ENCODE measurements at regions of chr3 and their contacts with region 1.

Region 1: GRCh38 chr3:125003369-125003853 is 52.4 kb downstream of the HEG1 start:
- DNase-seq: peak; percentile 42
- H3K4me3 ChIP-seq: no peak overlapping the region
- H3K27ac ChIP-seq: no peak overlapping the region
- H3K4me1 ChIP-seq: peaks cover 2% of the 10 kb centered on the region
- H3K27me3 ChIP-seq: no peaks in the 10 kb centered on the region
- CTCF ChIP-seq: no peak

Region 2: DNA sequence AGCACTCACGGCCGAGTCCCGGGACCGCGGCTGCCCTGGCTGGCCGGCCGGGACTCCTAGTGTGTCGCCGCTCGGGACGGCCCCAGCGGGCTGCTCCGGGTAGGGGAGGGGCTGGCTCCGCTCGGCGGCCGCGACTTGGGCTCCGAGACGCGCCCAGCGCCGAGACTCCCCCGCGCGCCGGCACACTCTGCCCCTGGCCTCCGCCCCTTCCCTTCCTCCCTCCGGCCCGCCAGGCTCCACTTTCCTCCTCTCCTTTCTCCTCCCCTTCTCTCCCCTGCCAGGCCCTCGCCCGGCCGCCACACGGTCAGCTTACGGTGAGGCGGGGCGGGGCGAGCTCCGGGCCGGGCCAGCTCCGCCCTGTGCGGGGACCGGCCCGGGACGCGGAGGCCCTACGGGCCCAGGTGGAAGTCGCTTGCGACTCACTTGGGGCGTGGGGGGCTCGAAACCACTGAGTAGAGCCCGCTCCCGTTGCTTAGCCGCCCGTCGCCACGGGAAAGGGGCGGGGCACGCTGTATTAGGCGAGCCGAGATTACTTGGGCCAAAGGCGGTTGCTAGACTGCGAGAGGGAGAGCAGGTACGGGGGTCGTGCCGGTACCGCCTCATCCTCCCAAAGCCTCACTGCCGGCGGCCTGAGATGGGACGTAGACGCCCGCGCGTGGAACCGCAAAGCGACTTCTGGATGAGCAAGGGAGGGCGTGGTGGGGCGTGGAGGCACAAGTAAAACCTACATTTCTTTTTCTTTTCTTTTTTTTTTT is 116.1 kb before region 1 on chr3 and contains the start of gene ITGB5:
- intact Hi-C with region 1: no loop called
- DNase-seq: peak; percentile 84
- H3K4me3 ChIP-seq: peak within 1 kb of the TSS; percentile 67
- H3K27ac ChIP-seq: peak within 1 kb of the TSS; percentile 87
- H3K4me1 ChIP-seq: no peaks in the 10 kb centered on the region
- H3K27me3 ChIP-seq: no peaks in the 10 kb centered on the region
- CTCF ChIP-seq: no peak
- total RNA-seq, gene ITGB5: 74.4 to 74.8 TPM

Region 3: DNA sequence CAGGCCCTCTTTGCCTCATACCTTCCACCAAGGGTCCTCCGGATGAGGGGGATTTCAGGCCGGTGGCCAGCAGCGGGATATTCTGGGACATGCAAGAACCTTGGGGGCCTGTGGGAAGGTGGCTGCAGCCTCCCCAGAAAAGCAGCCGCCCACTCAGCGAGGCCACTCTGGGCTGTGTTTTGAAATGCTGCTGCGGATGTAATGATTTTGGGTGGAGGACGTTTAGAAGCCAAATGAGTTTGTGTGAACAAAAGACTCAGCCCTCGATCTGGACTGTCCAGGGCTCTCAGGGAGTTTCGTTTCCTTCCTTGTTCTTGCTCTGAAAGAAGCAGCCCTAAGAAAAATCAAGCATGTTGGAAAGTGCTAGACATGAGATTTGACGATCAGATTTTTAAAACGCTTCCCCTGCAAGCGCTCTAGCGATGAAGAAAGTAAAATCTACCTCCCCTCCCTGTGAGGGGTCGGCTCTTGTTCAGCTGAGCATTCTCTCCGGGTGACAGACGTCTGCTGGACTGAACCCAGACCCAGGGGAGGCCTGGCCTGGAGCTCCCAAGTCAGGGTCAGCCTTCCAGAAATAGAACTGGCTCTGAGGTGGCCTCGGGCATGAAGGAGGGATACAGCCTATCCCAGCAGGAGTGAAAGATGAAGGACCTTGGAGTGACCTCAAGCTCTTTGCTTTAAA is 39.5 kb after region 1 on chr3:
- intact Hi-C with region 1: loop called (anchors 5 kb)
- DNase-seq: no peak
- H3K4me3 ChIP-seq: no peak overlapping the region
- H3K27ac ChIP-seq: peak overlapping the region; percentile 66
- H3K4me1 ChIP-seq: no peaks in the 10 kb centered on the region
- H3K27me3 ChIP-seq: no peaks in the 10 kb centered on the region
- CTCF ChIP-seq: no peak